A673 (cell line): ENCODE measurements at regions of chr19 and their contacts with region 1.

Region 1: DNA sequence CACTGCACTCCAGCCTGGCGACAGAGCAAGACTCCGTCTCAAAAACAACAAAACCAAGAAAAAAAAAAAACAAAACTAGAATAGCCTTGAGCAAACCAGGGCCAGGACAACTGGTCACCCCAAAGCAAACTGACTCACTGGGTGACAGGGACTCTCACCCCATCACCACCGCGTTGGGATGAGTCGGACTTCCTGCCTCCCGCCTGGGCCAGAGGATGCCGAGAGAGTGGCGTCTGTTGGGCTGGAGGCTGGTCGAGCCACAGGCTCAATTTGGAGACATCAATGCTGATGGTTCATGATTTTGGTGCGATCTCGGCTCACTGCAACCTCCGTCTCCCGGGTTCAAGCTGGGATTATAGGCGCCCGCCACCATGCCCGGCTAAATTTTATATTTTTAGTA is 11.6 kb downstream of the TMPRSS9 start:
- DNase-seq: no peak
- H3K4me3 ChIP-seq: no peak overlapping the region
- H3K27ac ChIP-seq: no peak overlapping the region
- H3K4me1 ChIP-seq: no peaks in the 10 kb centered on the region
- H3K27me3 ChIP-seq: no peaks in the 10 kb centered on the region
- CTCF ChIP-seq: no peak

Region 2: DNA sequence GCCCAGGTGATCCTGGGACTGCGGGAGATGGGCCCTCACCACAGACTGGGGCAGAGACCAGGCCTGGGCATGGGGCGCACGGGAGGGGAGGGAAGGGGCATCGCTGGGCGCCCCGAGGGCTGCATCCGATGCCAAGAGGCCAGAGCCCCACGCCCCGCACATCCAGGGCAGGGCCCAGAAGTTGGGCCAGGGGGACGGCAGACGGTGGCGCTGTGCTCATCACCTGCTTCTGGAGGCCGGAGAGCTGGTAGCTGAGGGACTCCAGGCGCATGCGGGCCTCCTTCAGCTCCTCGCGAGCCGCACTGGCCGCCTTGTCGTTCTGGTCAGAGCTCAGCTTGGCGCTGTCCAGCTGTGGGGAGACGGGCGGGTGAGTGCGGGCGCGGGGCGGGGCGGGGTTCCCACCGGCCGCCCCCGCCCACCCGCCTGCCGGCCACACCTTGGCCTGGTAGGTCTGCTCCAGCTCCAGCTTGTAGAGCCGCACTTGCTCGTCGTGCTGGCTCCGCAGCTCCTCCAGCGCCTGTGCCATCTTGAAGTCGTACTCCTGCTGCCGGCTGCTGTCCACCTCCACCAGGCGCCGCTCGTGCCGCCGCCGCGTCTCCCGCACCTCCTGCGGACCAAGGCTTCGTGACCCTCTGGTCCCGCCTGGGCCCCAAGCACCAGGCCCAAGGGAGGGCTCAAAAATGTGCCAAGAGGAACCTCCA is 63.1 kb after region 1 on chr19:
- CTCF ChIA-PET with region 1: no interaction called
- POLR2A ChIA-PET with region 1: interaction called, 18 read pairs
- intact Hi-C with region 1: no loop called
- DNase-seq: no peak
- H3K4me3 ChIP-seq: no peak overlapping the region
- H3K27ac ChIP-seq: no peak overlapping the region
- H3K4me1 ChIP-seq: peaks cover under 1% of the 10 kb centered on the region
- H3K27me3 ChIP-seq: no peaks in the 10 kb centered on the region
- CTCF ChIP-seq: no peak